Posterior vena cava (tissue), 2 donors: ENCODE measurements at regions of chr7 and their contacts with region 1.

Region 1: DNA sequence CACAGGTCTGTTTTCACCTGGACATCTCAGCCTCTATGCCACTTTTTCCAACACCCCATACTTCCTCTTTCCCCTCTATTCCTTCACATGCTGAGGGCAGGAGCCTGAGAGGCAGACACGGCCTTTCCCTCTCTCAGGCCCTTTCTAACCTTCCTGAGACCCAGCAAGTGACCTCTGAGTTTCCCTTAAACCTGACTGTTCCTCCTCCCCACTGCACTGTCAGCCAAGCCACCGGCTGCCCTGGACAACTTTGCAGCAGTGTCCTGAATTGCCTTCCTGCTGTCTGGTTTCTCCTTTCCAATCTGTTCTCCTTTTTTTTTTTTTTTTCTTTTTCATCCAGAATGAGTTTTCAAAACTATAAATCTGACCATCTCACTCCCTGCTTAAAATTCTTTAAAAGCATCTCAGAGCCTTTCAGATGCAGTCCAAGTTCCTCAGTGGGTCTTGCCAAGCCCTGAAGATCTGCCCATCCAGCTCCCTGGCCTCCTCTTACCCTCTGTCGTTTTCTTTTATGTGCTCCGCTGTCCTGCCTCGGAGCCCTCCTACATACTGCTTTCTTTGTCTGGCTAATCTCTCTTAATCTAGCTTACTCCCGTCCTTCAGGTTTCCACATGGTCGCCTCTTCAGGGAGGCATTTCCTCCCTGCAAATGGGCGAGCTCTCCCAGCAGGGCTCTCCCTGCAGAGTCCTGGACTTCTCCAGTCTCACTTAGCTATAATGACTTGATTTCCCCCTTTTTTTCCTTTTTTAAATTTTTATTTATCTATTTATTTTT is 30.5 kb downstream of the SLC13A4 start:
- DNase-seq: no peak

Region 2: GRCh38 chr7:135719688-135720087 is 22.2 kb after region 1 on chr7:
- intact Hi-C with region 1: loop called in 1 of 2 experiments (anchors 1 kb)
- DNase-seq: no peak